SK-N-SH (cell line): ENCODE measurements at regions of chr6 and their contacts with region 1.

Region 1: DNA sequence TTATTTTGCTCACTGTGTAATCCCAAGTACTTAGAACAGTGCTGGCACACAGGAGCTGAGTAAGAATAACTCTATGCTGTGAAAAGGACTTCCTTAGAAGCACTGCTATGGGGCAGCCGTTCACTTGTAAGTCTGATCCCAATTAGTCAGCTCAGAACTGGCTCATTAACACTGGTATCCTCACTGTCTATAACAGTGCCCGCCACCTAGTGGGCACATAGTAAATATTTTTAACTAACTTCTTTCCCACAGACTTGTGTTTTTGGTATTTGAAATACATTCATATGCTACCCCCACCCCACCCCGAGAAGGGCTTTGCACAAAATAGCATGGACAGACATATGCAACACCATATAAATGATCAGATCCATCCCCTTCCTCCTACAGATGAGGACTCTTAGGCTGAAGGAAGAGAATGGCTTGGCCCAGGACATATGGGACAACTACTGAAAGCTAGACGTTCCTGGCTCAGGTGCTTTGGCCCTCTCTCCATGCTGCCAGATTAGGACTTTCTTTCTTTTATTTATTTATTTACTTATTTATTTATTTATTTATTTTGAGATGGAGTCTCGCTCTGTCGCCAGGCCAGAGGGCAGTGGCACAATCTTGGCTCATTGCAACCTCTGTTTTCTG is 47.1 kb downstream of the DST start:
- DNase-seq: peak; percentile 10
- H3K4me3 ChIP-seq: no peak overlapping the region
- H3K27ac ChIP-seq: peak overlapping the region in 1 of 2 experiments; percentile 22; a peak in 1 of 4 replicates
- H3K4me1 ChIP-seq: no peaks in the 10 kb centered on the region; a peak in 2 of 4 replicates
- H3K27me3 ChIP-seq: no peaks in the 10 kb centered on the region
- CTCF ChIP-seq: peak; percentile 83
- EP300 ChIP-seq: no peak
- RAD21 ChIP-seq: peak; percentile 62

Region 2: DNA sequence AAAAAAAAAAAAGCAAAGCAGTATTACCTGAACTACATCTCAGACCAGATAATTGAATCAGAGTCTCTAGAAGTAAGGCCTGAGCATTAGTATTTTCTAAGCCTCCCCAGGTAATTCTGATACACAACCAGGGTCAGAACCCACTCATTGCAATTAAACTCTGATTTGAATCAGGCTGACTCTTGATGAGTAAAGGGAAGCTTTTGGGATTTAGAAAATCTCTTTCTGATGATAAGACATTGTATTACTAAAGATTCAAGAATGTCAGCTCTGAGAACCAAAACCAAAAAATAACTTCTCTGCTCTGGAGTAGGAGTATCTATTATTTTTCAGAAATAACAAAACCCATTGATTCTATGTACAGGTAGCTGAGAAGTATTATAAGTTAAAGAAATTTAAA is 248.1 kb before region 1 on chr6:
- CTCF ChIA-PET with region 1: interaction called, 135 read pairs
- POLR2A ChIA-PET with region 1: no interaction called
- DNase-seq: no peak
- H3K4me3 ChIP-seq: no peak overlapping the region
- H3K27ac ChIP-seq: peak overlapping the region in 1 of 2 experiments; percentile 81; a peak in 2 of 4 replicates
- H3K4me1 ChIP-seq: peaks cover 6 to 29% of the 10 kb centered on the region in 2 experiments
- H3K27me3 ChIP-seq: no peaks in the 10 kb centered on the region
- CTCF ChIP-seq: no peak
- EP300 ChIP-seq: peak in 1 of 2 experiments; percentile 67; a peak in 1 of 4 replicates
- RAD21 ChIP-seq: no peak

Region 3: DNA sequence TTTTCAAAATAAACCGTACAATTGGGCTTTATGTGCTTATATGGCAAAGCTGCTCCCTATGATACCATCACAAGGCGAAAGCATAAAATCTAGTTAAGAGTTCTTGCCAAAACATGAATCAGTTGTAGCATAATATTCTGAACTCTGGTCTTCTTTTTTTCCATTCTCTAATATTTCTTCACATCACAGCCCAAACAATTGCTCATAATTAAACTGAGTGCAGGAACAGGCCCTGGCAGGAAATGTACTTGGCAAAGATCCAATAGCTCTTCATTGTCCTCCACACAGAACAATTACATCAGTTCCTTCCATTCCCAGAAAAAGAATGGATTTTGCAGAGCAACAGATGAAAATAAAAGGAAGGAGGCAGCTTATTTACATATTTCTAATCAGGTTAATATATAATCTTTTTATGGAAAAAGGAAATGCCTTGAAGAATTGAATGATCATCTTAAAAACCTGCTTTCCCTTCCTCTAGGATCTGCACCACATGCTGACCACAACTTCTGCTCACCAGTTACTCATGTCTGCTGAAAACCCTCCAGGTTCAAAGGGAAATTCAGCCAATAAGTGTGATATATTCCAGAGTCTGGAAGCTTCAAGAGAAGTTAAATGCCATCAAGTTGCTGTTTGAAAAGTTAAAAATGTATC is 224.9 kb before region 1 on chr6:
- CTCF ChIA-PET with region 1: interaction called, 150 read pairs
- POLR2A ChIA-PET with region 1: no interaction called
- DNase-seq: peak; percentile 51
- H3K4me3 ChIP-seq: peak overlapping the region in 1 of 2 experiments; percentile 36; a peak in 2 of 4 replicates
- H3K27ac ChIP-seq: peak overlapping the region; percentile 94 to 97
- H3K4me1 ChIP-seq: peaks cover 28 to 33% of the 10 kb centered on the region in 2 experiments
- H3K27me3 ChIP-seq: no peaks in the 10 kb centered on the region
- CTCF ChIP-seq: no peak
- EP300 ChIP-seq: peak; percentile 66 to 83; a peak in 3 of 4 replicates
- RAD21 ChIP-seq: no peak; the same call in 1 of the 2 replicates

Region 4: GRCh38 chr6:56549014-56549413 is 46.6 kb before region 1 on chr6:
- CTCF ChIA-PET with region 1: interaction called, 53 read pairs
- POLR2A ChIA-PET with region 1: no interaction called
- DNase-seq: peak; percentile 27
- H3K4me3 ChIP-seq: no peak overlapping the region
- H3K27ac ChIP-seq: peak overlapping the region; percentile 33 to 55; a peak in 3 of 4 replicates
- H3K4me1 ChIP-seq: peaks cover 22 to 26% of the 10 kb centered on the region in 2 experiments; a peak in 3 of 4 replicates
- H3K27me3 ChIP-seq: no peaks in the 10 kb centered on the region
- CTCF ChIP-seq: peak; percentile 67
- EP300 ChIP-seq: peak in 1 of 2 experiments; percentile 30; a peak in 1 of 4 replicates
- RAD21 ChIP-seq: peak; percentile 77

Region 5: GRCh38 chr6:56581296-56581925 is 14.2 kb before region 1 on chr6:
- CTCF ChIA-PET with region 1: interaction called, 76 read pairs
- POLR2A ChIA-PET with region 1: no interaction called
- DNase-seq: no peak
- H3K4me3 ChIP-seq: no peak overlapping the region
- H3K27ac ChIP-seq: no peak overlapping the region; a peak in 1 of 4 replicates
- H3K4me1 ChIP-seq: peaks cover 0 to 9% of the 10 kb centered on the region in 2 experiments; a peak in 2 of 4 replicates
- H3K27me3 ChIP-seq: no peaks in the 10 kb centered on the region
- CTCF ChIP-seq: no peak
- EP300 ChIP-seq: no peak
- RAD21 ChIP-seq: no peak

Region 6: GRCh38 chr6:56933650-56934049 is 338.0 kb after region 1 on chr6:
- CTCF ChIA-PET with region 1: no interaction called
- POLR2A ChIA-PET with region 1: no interaction called
- DNase-seq: no peak
- H3K4me3 ChIP-seq: no peak overlapping the region
- H3K27ac ChIP-seq: no peak overlapping the region
- H3K4me1 ChIP-seq: no peaks in the 10 kb centered on the region; a peak in 2 of 4 replicates
- H3K27me3 ChIP-seq: no peaks in the 10 kb centered on the region
- CTCF ChIP-seq: no peak
- EP300 ChIP-seq: no peak
- RAD21 ChIP-seq: no peak